ENCODE measurements at regions of chr5 and their contacts with region 1.

Region 1: DNA sequence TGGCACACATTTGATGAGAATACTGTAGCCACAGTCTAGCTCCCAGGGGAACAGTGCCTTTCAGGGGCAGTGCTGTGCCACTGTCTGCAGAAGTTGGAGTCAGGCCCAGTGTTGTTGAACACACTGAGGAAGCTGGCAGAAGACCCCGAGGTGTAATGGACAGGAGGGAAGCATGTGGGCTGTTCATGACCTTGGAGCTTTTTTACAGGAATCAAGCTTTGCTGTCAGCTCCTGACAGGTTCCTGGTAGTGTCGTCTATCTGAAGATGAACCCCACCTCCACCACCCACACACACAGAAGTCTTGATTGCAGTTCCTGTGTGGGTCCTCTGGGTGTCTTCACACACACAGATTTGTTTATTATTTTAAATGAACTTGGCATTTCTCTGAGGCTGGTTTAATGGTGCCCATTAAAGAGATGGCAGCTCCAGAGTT is 40.3 kb upstream of the TNFAIP8 start:
- DNase-seq: no peak
- H3K4me3 ChIP-seq: no peak overlapping the region
- H3K27ac ChIP-seq: no peak overlapping the region
- H3K4me1 ChIP-seq: no peaks in the 10 kb centered on the region
- H3K27me3 ChIP-seq: no peaks in the 10 kb centered on the region
- CTCF ChIP-seq: no peak
- EP300 ChIP-seq: no peak
- POLR2A ChIP-seq: no peak
- RAD21 ChIP-seq: peak; percentile 14 to 20; a peak in 2 of 4 replicates

Region 2: GRCh38 chr5:119332978-119333401 is 17.5 kb after region 1 on chr5:
- CTCF ChIA-PET with region 1: interaction called, 19 read pairs
- POLR2A ChIA-PET with region 1: interaction called, 3 read pairs
- DNase-seq: no peak
- H3K4me3 ChIP-seq: no peak overlapping the region
- H3K27ac ChIP-seq: no peak overlapping the region
- H3K4me1 ChIP-seq: peaks cover 0 to 10% (median 5%) of the 10 kb centered on the region in 4 experiments
- H3K27me3 ChIP-seq: no peaks in the 10 kb centered on the region
- CTCF ChIP-seq: no peak
- EP300 ChIP-seq: no peak
- POLR2A ChIP-seq: no peak
- RAD21 ChIP-seq: no peak